Activated CD4-positive, alpha-beta T cell treated with anti-CD3 and anti-CD28 coated beads, Interleukin-2, amount 10 ng/mL, durations not matched to agents 24 days and 14 days (primary cell): ENCODE measurements at regions of chr16 and their contacts with region 1.

Region 1: GRCh38 chr16:4802659-4803287 is 340 bp upstream of the ROGDI start:
- DNase-seq: peak; percentile 98
- H3K4me3 Mint-ChIP-seq: peak overlapping the region; percentile 83
- H3K27ac Mint-ChIP-seq: no peak overlapping the region
- H3K4me1 Mint-ChIP-seq: peaks cover 7% of the 10 kb centered on the region
- H3K27me3 Mint-ChIP-seq: no peaks in the 10 kb centered on the region

Region 2: DNA sequence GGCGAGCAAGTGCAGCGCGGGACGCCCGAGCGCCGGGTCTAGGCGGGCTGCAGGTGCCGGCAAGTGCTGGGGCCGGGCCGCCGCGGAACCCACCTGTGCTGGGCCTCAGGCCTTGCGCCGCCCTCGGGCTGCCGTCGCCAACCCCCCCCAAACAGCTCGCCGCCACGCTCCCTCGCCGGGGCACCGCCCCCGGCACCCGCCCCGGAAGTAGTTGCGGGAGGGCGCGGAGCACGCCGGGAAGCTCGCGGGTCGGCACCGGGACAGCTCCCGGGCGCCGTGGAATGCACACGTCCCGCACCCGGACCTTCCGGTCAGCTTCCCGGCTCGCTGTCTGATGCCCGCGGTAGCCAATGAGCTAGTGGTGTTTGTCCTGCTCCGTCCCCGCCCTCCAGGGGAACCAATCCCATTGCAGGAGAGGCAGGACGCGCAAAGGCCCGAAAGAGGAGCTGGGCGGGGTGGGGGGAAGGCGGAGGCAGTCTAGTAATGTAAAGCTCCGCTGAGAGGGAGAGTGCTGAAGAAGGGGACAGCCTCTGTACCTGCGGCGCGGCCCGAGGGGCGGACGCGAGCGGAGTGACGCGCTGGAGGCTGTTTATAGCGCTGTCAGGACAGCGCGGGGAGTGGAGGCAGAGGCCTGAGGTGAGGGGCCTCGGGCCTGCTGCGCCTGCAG is 68.6 kb before region 1 on chr16 and contains the starts of genes ANKS3 and DNAAF8:
- intact Hi-C with region 1: loop called (anchors 2 kb)
- DNase-seq: peak; percentile 96
- H3K4me3 Mint-ChIP-seq: peak within 1 kb of the TSS; percentile 93
- H3K27ac Mint-ChIP-seq: peak within 1 kb of the TSS; percentile 91
- H3K4me1 Mint-ChIP-seq: peaks cover 13% of the 10 kb centered on the region
- H3K27me3 Mint-ChIP-seq: no peaks in the 10 kb centered on the region
- total RNA-seq, gene ANKS3: 21.8 and 22.3 TPM in 2 replicates
- total RNA-seq, gene DNAAF8: not detected in 2 replicates